Activated naive CD4-positive, alpha-beta T cell treated with anti-CD3 and anti-CD28 coated beads for 36 hours (primary cell): ENCODE measurements at regions of chr9 and their contacts with region 1.

Region 1: DNA sequence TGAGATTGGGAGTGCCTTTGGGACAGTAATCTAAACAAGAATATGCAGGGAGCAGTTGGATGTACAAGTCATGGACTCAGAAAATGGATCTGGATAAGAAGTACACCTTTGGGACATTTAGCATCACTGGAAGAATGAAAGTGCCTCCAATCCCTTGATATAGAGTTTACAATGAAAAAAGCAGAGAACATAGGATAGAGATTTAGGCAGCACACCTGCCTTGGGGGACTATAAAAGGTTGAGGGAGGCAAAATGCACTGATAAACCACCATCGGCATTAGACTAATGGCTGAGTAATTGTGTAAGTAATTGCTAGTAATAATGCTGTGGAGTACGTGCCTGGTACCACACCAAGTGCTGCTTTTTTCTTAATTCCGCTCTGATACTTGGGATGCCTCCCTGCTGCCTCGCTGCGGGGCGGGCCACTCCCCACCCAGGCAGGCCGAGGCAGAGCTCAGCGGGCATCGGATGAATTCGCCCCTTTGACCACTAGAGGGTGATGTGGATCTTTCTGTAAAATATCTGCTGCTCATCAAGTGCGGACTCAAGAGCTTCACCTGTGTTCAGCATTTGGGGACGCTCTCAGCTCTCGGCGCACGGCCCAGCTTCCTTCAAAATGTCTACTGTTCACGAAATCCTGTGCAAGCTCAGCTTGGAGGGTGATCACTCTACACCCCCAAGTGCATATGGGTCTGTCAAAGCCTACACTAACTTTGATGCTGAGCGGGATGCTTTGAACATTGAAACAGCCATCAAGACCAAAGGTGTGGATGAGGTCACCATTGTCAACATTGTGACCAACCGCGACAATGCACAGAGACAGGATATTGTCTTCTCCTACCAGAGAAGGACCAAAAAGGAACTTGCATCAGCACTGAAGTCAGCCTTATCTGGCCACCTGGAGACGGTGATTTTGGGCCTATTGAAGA is 99.9 kb downstream of the ANKRD18B start:
- DNase-seq: peak; percentile 81
- H3K4me3 Mint-ChIP-seq: no peak overlapping the region
- H3K27ac Mint-ChIP-seq: no peak overlapping the region
- H3K4me1 Mint-ChIP-seq: peaks cover 8% of the 10 kb centered on the region
- H3K27me3 Mint-ChIP-seq: peaks cover 17% of the 10 kb centered on the region

Region 2: DNA sequence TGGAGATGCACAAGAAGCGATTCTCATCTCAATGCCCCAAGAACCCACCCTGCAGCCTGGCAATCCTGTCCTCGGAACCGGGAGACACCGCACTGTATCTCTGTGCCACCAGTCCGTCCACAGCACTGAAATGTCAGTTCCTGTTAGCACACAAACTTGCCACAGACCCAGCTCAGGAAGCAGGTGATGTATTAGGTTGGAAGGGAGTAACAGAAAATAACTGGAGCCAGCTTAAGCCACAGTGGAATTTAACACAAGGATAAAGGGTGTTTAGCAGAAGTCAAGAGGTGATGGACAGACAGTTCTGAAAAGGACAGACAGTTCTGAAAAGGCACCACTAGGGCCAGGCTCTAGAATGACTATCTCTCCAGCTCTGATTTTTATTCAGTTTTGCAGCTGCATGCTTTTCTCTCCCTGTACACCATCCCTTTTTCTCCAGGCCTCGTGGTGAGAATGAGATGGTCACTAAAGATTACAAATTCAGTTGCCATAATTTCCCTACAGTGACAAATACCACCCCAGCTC is 14.5 kb after region 1 on chr9:
- CTCF ChIA-PET with region 1: interaction called, 24 read pairs
- intact Hi-C with region 1: no loop called
- DNase-seq: no peak
- H3K4me3 Mint-ChIP-seq: no peak overlapping the region
- H3K27ac Mint-ChIP-seq: no peak overlapping the region
- H3K4me1 Mint-ChIP-seq: no peaks in the 10 kb centered on the region
- H3K27me3 Mint-ChIP-seq: peaks cover 52% of the 10 kb centered on the region

Region 3: GRCh38 chr9:33649463-33649862 is 25.5 kb after region 1 on chr9:
- CTCF ChIA-PET with region 1: interaction called, 19 read pairs
- intact Hi-C with region 1: no loop called
- DNase-seq: no peak
- H3K4me3 Mint-ChIP-seq: no peak overlapping the region
- H3K27ac Mint-ChIP-seq: no peak overlapping the region
- H3K4me1 Mint-ChIP-seq: peaks cover 2% of the 10 kb centered on the region
- H3K27me3 Mint-ChIP-seq: peaks cover 22% of the 10 kb centered on the region

Region 4: DNA sequence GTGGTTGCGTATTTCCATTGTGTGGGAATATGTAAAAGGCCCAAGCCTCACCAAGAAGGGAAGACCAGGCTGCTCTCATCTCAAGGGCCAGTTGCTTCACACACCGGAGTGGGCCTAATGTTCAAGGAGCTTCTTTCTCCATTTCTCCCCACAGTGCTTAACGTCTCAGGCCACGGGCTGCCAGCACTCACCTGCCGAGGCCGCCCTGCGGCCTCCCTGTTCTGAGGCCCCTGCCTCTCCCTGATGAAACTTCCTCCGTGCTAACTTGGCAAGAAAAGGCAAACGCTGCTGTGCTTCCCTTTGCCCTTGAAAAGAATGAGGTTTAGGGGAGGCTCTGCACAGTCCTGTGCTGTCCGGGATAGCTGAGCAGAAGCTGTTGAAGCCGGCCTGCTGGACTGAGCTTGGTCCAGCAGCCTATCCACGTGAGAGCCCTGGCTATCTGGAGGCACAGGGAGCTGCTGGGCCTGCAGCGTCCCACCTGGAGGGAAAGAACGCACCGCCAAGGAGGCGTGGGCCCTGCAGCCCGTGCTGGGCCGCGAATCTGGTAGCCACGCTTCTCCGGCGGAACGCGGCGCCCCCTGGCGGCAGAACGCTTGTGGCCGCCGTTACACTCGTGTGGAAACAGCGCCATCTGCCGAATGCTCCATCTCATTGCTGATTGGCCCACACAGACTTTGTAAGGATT is 97.9 kb after region 1 on chr9:
- CTCF ChIA-PET with region 1: interaction called, 321 read pairs
- intact Hi-C with region 1: loop called (anchors 1 kb)
- DNase-seq: peak; percentile 90
- H3K4me3 Mint-ChIP-seq: no peak overlapping the region
- H3K27ac Mint-ChIP-seq: no peak overlapping the region
- H3K4me1 Mint-ChIP-seq: no peaks in the 10 kb centered on the region
- H3K27me3 Mint-ChIP-seq: peaks cover 7% of the 10 kb centered on the region

Region 5: DNA sequence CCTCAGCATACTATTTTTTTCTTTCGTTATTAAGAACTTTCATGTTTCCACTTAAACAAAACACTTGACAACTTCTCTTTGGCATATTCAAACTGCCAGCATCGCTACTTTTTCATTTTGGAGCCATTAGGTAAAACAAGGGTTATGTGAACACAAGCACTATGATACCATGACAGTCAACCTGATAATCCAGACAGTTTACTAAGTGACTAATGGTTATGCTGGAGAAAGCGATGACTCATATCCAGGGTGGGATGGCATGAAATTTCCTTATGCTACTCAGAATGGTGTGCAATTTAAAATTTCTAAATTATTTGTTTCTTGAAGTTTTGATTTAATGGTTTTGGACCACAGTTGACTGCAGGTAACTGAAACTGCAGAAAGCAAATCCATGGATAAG is 141.5 kb after region 1 on chr9:
- CTCF ChIA-PET with region 1: no interaction called
- intact Hi-C with region 1: no loop called
- DNase-seq: no peak
- H3K4me3 Mint-ChIP-seq: no peak overlapping the region
- H3K27ac Mint-ChIP-seq: no peak overlapping the region
- H3K4me1 Mint-ChIP-seq: peaks cover 4% of the 10 kb centered on the region
- H3K27me3 Mint-ChIP-seq: no peaks in the 10 kb centered on the region

Region 6: GRCh38 chr9:33778700-33779351 is 154.9 kb after region 1 on chr9:
- CTCF ChIA-PET with region 1: interaction called, 12 read pairs
- intact Hi-C with region 1: loop called (anchors 1 kb)
- DNase-seq: peak; percentile 70
- H3K4me3 Mint-ChIP-seq: no peak overlapping the region
- H3K27ac Mint-ChIP-seq: no peak overlapping the region
- H3K4me1 Mint-ChIP-seq: peaks cover 2% of the 10 kb centered on the region
- H3K27me3 Mint-ChIP-seq: no peaks in the 10 kb centered on the region